ENCODE measurements at regions of chr3 and their contacts with region 1.

Region 1: DNA sequence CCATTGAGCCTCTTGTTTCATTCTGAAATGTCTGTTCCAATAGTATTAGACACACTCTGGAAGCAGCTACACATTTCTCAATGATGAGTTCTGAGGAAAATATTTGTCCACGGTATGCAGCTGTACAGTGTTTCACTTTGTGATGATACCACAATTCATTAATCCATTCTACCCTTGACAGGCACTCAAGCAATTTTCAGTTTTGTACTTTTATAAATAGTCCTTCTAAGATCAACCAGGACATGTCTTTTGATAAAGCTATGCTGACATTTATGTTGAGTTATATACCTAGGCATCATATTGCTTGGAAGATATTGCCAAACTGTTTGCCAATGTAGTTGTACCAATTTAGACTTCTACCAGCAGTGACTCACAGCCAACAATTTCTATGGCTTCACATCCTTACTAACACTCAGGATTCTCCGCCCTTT is 165.1 kb upstream of the COL8A1 start:
- DNase-seq: peak; percentile 43
- ATAC-seq: peak; percentile 69
- H3K4me3 ChIP-seq: no peak overlapping the region
- H3K27ac ChIP-seq: 0 out of 2 replicates have a peak overlapping the region, but pooled peaks have one; percentile 7
- H3K4me1 ChIP-seq: peaks cover 6% of the 10 kb centered on the region
- H3K27me3 ChIP-seq: no peaks in the 10 kb centered on the region
- CTCF ChIP-seq: no peak
- POLR2A ChIP-seq: no peak
- RAD21 ChIP-seq: no peak

Region 2: GRCh38 chr3:98918586-98918985 is 554.8 kb before region 1 on chr3:
- CTCF ChIA-PET with region 1: no interaction called
- POLR2A ChIA-PET with region 1: no interaction called
- dilution Hi-C with region 1: no loop called
- in situ Hi-C with region 1: no loop called
- intact Hi-C with region 1: no loop called
- DNase-seq: peak; percentile 69
- ATAC-seq: peak; percentile 74
- H3K4me3 ChIP-seq: no peak overlapping the region
- H3K27ac ChIP-seq: no peak overlapping the region
- H3K4me1 ChIP-seq: peaks cover 11% of the 10 kb centered on the region
- H3K27me3 ChIP-seq: no peaks in the 10 kb centered on the region
- CTCF ChIP-seq: no peak
- POLR2A ChIP-seq: no peak
- RAD21 ChIP-seq: no peak

Region 3: DNA sequence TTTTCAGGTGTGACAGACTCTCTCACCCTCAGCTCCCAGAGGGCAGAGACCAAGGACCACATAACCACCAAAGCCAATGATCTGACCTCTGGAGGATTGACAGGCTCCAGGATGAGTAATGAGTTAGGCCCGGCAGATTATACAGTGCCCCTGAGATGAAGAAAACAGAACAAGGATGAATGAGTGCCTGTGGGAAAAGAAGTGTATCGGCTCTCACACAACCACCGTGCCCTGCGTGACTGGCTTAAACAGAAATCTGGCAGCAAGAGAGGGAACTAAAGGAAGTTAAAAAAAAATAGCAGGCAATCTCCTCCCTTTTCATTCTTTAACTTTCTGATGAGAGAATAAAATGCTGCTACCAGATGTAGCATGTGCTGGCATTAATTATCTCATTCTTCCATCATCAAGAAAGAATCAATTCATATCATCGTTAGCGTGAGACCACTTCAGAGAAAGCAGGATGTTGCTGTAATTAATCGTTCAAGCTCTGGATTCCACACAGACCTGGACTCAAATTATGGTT is 62.5 kb before region 1 on chr3:
- CTCF ChIA-PET with region 1: no interaction called
- POLR2A ChIA-PET with region 1: no interaction called
- dilution Hi-C with region 1: no loop called
- in situ Hi-C with region 1: no loop called
- intact Hi-C with region 1: loop called (anchors 5 kb)
- DNase-seq: peak; percentile 79
- ATAC-seq: peak; percentile 48
- H3K4me3 ChIP-seq: no peak overlapping the region
- H3K27ac ChIP-seq: peak overlapping the region; percentile 41
- H3K4me1 ChIP-seq: peaks cover 10% of the 10 kb centered on the region
- H3K27me3 ChIP-seq: no peaks in the 10 kb centered on the region
- CTCF ChIP-seq: no peak
- POLR2A ChIP-seq: no peak
- RAD21 ChIP-seq: no peak

Region 4: GRCh38 chr3:100776746-100777145 is 1303.4 kb after region 1 on chr3:
- CTCF ChIA-PET with region 1: no interaction called
- POLR2A ChIA-PET with region 1: no interaction called
- dilution Hi-C with region 1: no loop called
- in situ Hi-C with region 1: no loop called
- intact Hi-C with region 1: no loop called
- DNase-seq: peak; percentile 39
- ATAC-seq: no peak
- H3K4me3 ChIP-seq: no peak overlapping the region
- H3K27ac ChIP-seq: no peak overlapping the region
- H3K4me1 ChIP-seq: peaks cover 7% of the 10 kb centered on the region; the same call in 1 of the 2 replicates
- H3K27me3 ChIP-seq: no peaks in the 10 kb centered on the region
- CTCF ChIP-seq: 0 out of 2 replicates have a peak, but pooled peaks have one; percentile 4
- POLR2A ChIP-seq: no peak
- RAD21 ChIP-seq: no peak